ENCODE measurements at regions of chr4 and their contacts with region 1.

Region 1: GRCh38 chr4:173370477-173371291 is at the start of gene SAP30:
- DNase-seq: peak; percentile 98 to 99 (median 99)
- H3K4me3 ChIP-seq: peak within 1 kb of the TSS; percentile 13 to 92 (median 59)
- H3K27ac ChIP-seq: peak within 1 kb of the TSS; percentile 88 to 98 (median 92)
- H3K4me1 ChIP-seq: peaks cover 0 to 22% of the 10 kb centered on the region in 2 donors
- H3K27me3 ChIP-seq: no peaks in the 10 kb centered on the region
- CTCF ChIP-seq: no peak
- POLR2A ChIP-seq: peak; percentile 95 to 96
- total RNA-seq, gene SAP30: 10.3 to 39.1 (median 14.6) TPM

Region 2: GRCh38 chr4:173334085-173334772 is 36.5 kb before region 1 on chr4 and contains the start of gene HMGB2:
- intact Hi-C with region 1: loop called in 1 of 2 experiments (anchors 5 kb)
- DNase-seq: peak; percentile 100
- H3K4me3 ChIP-seq: peak within 1 kb of the TSS; percentile 50 to 99 (median 69)
- H3K27ac ChIP-seq: peak within 1 kb of the TSS; percentile 94 to 100 (median 96)
- H3K4me1 ChIP-seq: peaks cover 0 to 15% of the 10 kb centered on the region in 2 donors
- H3K27me3 ChIP-seq: no peaks in the 10 kb centered on the region
- CTCF ChIP-seq: peak in 1 of 6 experiments; percentile 10
- POLR2A ChIP-seq: peak; percentile 92 to 97
- total RNA-seq, gene HMGB2: 7.5 to 83.1 (median 22.9) TPM

Region 3: GRCh38 chr4:173529477-173530325 is 159.0 kb after region 1 on chr4 and contains the start of gene HAND2:
- intact Hi-C with region 1: no loop called
- DNase-seq: peak in 1 of 7 donors; percentile 93
- H3K4me3 ChIP-seq: peak within 1 kb of the TSS in 1 of 4 donors; percentile 37
- H3K27ac ChIP-seq: peak within 1 kb of the TSS in 1 of 5 donors; percentile 68
- H3K4me1 ChIP-seq: peaks cover 0 to 6% of the 10 kb centered on the region in 2 donors
- H3K27me3 ChIP-seq: peaks cover 63% of the 10 kb centered on the region
- CTCF ChIP-seq: no peak
- POLR2A ChIP-seq: peak; percentile 40 to 78
- total RNA-seq, gene HAND2: 0.11 to 44.9 (median 4.2) TPM

Region 4: DNA sequence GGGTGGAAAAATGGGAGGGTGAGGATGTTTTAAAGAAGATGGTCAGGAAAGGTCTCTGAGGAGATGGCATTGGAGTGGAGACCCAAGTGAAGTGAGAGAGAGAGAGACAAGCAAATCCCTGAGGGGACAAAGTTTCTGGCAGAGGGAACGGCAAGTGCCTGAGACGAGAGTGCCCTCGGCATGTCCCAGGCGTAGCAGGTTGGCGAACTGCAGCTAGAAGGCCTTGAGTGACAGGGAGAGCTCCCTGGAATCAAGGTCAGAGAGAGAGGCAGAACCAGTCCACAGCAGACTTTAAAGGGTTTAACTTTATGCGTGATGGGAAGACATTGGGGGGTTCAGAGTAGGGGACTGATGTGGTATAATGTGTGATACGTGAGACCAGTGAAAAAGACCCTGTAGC is 309.6 kb after region 1 on chr4:
- intact Hi-C with region 1: no loop called
- DNase-seq: no peak
- H3K4me3 ChIP-seq: no peak overlapping the region
- H3K27ac ChIP-seq: no peak overlapping the region
- H3K4me1 ChIP-seq: no peaks in the 10 kb centered on the region
- H3K27me3 ChIP-seq: no peaks in the 10 kb centered on the region
- CTCF ChIP-seq: no peak
- POLR2A ChIP-seq: no peak

Measured in adrenal gland (tissue), 19 donors.